ENCODE measurements at regions of chr19 and their contacts with region 1.

Region 1: DNA sequence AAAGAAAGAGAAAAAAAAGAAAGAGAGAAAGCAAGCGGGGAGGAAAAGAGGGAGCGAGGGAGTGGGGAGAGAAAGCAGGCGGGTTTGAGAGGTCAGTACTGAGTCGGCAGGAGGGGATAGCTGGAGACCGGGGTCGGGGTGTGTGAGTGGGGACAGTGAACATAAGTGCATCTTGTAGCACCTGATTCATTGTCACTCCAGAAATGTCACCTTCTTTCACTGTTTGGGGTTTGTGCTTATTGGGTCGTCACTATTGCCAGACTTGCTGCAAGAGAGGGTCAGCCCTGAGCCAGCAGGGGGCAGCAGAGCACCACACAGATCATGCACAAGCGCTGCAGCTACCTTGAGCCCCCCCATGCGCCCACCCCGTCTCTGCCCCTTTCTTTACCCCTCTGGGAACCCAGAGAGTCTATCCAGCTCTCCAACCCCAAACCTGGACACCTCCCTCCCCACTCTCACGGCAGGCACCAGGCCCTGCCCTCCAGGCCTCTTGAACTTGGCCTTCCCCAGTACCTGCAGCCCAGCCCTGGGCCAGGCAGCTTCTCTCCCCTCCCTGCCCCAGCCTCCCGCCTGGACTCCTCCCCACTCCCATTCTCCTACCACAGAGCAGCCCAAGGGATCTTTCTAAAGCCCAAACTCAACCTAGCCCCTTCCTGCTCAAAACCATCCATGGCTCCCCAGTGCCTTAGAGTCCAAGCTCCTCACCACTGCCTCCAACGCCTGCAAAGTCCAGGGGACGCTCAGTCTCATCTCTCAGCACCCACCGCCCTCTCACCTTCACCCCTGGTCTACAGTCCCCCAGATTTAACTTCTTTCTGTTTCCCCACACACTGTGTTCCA is 9.7 kb upstream of the CEACAM16 start:
- DNase-seq: peak; percentile 42 to 79 (median 69)
- ATAC-seq: peak; percentile 63
- H3K4me3 ChIP-seq: no peak overlapping the region
- H3K4me3 Mint-ChIP-seq: peak overlapping the region in 1 of 10 donors; percentile 20
- H3K27ac ChIP-seq: no peak overlapping the region
- H3K27ac Mint-ChIP-seq: peak overlapping the region in 4 of 9 donors; percentile 45 to 74 (median 62)
- H3K4me1 ChIP-seq: peaks cover 0 to 21% of the 10 kb centered on the region in 2 donors
- H3K4me1 Mint-ChIP-seq: peaks cover 25 to 43% (median 32%) of the 10 kb centered on the region in 7 donors
- H3K27me3 ChIP-seq: no peaks in the 10 kb centered on the region
- H3K27me3 Mint-ChIP-seq: peaks cover 5 to 19% (median 9%) of the 10 kb centered on the region in 5 donors

Region 2: DNA sequence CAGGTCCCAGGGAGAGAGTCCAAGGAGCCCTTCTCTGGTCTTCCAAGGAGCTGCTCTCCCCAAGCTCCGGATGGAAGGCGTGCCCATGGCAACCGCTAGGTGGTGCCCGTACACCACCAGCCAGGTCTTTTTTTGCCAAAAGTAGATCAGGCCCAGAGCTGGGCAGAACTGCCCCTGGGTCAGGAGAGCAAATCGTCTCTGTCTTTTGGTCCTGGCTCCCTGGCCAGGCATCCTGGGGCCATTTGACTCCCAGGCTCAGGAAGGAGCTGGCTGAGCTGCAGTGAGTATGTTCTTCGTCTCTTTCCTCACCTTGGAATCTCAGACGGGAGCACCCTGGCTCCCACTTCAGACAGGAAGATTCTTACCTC is 34.7 kb after region 1 on chr19:
- CTCF ChIA-PET with region 1: interaction called, 61 read pairs
- POLR2A ChIA-PET with region 1: no interaction called
- intact Hi-C with region 1: loop called (anchors 1 to 2 kb)
- DNase-seq: peak; percentile 64 to 84 (median 76)
- ATAC-seq: peak; percentile 93
- H3K4me3 ChIP-seq: no peak overlapping the region
- H3K4me3 Mint-ChIP-seq: peak overlapping the region in 1 of 10 donors; percentile 60
- H3K27ac ChIP-seq: no peak overlapping the region
- H3K27ac Mint-ChIP-seq: peak overlapping the region in 5 of 9 donors; percentile 26 to 79 (median 61)
- H3K4me1 ChIP-seq: peaks cover 0 to 10% of the 10 kb centered on the region in 2 donors
- H3K4me1 Mint-ChIP-seq: peaks cover 8 to 62% (median 24%) of the 10 kb centered on the region in 7 donors
- H3K27me3 ChIP-seq: no peaks in the 10 kb centered on the region
- H3K27me3 Mint-ChIP-seq: peaks cover 0 to 4% (median 0%) of the 10 kb centered on the region in 5 donors

Region 3: GRCh38 chr19:44746946-44747738 is 57.9 kb after region 1 on chr19:
- CTCF ChIA-PET with region 1: no interaction called
- POLR2A ChIA-PET with region 1: no interaction called
- intact Hi-C with region 1: loop called in 1 of 2 experiments (anchors 1 kb)
- DNase-seq: peak; percentile 51 to 97 (median 61)
- ATAC-seq: peak; percentile 83
- H3K4me3 ChIP-seq: peak overlapping the region; percentile 91
- H3K4me3 Mint-ChIP-seq: peak overlapping the region; percentile 90 to 99 (median 92)
- H3K27ac ChIP-seq: peak overlapping the region; percentile 97
- H3K27ac Mint-ChIP-seq: peak overlapping the region; percentile 87 to 99 (median 94)
- H3K4me1 ChIP-seq: peaks cover 23 to 33% of the 10 kb centered on the region in 2 donors
- H3K4me1 Mint-ChIP-seq: peaks cover 35 to 56% (median 55%) of the 10 kb centered on the region in 7 donors
- H3K27me3 ChIP-seq: no peaks in the 10 kb centered on the region
- H3K27me3 Mint-ChIP-seq: peaks cover 0 to 3% (median 0%) of the 10 kb centered on the region in 5 donors

Region 4: GRCh38 chr19:44752816-44753618 is 63.7 kb after region 1 on chr19:
- CTCF ChIA-PET with region 1: interaction called, 3 read pairs
- POLR2A ChIA-PET with region 1: interaction called, 5 read pairs
- intact Hi-C with region 1: loop called in 1 of 2 experiments (anchors 2 kb)
- DNase-seq: peak; percentile 80 to 96 (median 95)
- ATAC-seq: peak; percentile 85
- H3K4me3 ChIP-seq: peak overlapping the region; percentile 40
- H3K4me3 Mint-ChIP-seq: peak overlapping the region; percentile 91 to 96 (median 94)
- H3K27ac ChIP-seq: peak overlapping the region; percentile 97
- H3K27ac Mint-ChIP-seq: peak overlapping the region; percentile 93 to 99 (median 97)
- H3K4me1 ChIP-seq: peaks cover 46 to 60% of the 10 kb centered on the region in 2 donors
- H3K4me1 Mint-ChIP-seq: peaks cover 36 to 71% (median 63%) of the 10 kb centered on the region in 7 donors
- H3K27me3 ChIP-seq: no peaks in the 10 kb centered on the region
- H3K27me3 Mint-ChIP-seq: peaks cover 0 to 3% (median 0%) of the 10 kb centered on the region in 5 donors

Region 5: DNA sequence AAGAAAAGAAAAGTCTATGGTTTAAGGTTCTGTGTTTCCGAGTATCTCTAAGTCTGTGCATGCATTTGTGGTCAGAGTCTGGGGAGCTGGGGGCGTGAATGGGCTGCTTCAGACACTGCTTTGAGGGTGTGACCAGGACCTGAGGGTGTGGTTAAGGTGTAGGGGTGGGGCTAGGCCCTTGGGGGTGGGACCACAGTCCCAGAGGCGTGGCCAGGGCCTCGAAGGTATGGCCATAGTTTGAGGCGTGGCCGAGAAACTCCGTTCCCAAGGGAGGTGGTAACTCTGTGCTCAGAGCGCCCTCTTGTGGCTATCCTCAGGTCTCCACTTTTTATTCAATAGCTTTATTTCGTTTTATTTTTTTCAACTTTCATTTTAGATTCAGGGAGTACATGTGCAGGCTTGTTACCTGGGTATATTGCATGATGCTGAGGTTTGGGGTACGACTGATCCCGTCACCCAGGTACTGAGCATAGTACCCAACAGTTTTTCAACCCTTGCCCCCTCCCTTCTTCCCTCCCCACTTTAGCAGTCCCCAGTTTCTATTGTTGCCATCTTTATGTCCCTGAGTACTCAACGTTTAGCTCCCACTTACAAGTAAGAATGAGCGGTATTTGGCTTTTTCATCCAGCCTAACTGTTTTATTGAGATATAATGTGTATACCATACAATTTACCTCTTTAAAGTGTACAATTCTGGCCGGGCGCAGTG is 81.4 kb after region 1 on chr19:
- CTCF ChIA-PET with region 1: interaction called, 65 read pairs
- POLR2A ChIA-PET with region 1: interaction called, 6 read pairs
- intact Hi-C with region 1: loop called (anchors 1 kb)
- DNase-seq: peak; percentile 88 to 96 (median 94)
- ATAC-seq: peak; percentile 100
- H3K4me3 ChIP-seq: no peak overlapping the region
- H3K4me3 Mint-ChIP-seq: peak overlapping the region; percentile 45 to 83 (median 72)
- H3K27ac ChIP-seq: no peak overlapping the region
- H3K27ac Mint-ChIP-seq: peak overlapping the region; percentile 69 to 95 (median 86)
- H3K4me1 ChIP-seq: peaks cover 5 to 9% of the 10 kb centered on the region in 2 donors
- H3K4me1 Mint-ChIP-seq: peaks cover 0 to 37% (median 24%) of the 10 kb centered on the region in 7 donors
- H3K27me3 ChIP-seq: no peaks in the 10 kb centered on the region
- H3K27me3 Mint-ChIP-seq: peaks cover 0 to 3% (median 0%) of the 10 kb centered on the region in 5 donors

Region 6: DNA sequence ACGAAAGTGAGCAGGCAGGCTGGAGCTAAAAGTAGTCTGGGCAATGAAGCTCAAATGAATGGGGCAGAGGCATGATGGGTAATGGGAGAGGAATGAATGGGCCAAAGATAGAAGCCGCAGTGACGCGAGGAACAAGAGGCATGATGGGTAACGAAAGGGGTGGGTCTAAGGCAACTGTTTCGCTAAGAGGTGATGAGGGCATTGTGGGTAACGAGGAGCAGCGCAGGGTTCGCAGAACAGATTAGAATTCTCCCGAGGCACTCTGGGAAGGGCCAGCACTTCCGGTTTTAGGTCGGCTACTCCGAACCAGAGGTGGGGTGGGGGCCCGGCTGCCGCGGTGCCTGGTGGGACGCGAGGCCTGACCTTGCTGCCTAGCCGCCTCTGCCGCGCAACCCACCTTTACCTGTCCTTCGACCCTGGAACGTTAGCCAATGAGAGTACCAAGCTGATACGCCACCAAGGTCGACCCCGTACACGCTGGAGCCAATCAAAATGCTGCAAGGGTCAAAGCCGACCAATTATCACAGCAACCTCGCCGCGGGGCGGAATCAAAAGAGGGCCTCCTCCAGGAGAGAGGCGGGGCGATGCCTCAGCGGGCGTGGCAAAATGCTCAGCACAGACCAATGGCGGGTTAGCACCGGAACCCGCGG is 201.2 kb after region 1 on chr19:
- CTCF ChIA-PET with region 1: no interaction called
- POLR2A ChIA-PET with region 1: no interaction called
- intact Hi-C with region 1: loop called in 1 of 2 experiments (anchors 5 kb)
- DNase-seq: peak; percentile 97 to 100 (median 100)
- ATAC-seq: peak; percentile 86
- H3K4me3 ChIP-seq: peak overlapping the region; percentile 69
- H3K4me3 Mint-ChIP-seq: peak overlapping the region; percentile 83 to 93 (median 89)
- H3K27ac ChIP-seq: peak overlapping the region; percentile 84
- H3K27ac Mint-ChIP-seq: peak overlapping the region; percentile 90 to 96 (median 94)
- H3K4me1 ChIP-seq: peaks cover 10 to 20% of the 10 kb centered on the region in 2 donors
- H3K4me1 Mint-ChIP-seq: peaks cover 18 to 44% (median 35%) of the 10 kb centered on the region in 7 donors
- H3K27me3 ChIP-seq: no peaks in the 10 kb centered on the region
- H3K27me3 Mint-ChIP-seq: no peaks in the 10 kb centered on the region

Measured in naive thymus-derived CD4-positive, alpha-beta T cell (primary cell).